Heart right ventricle (tissue), 16 donors: ENCODE measurements at regions of chr2 and their contacts with region 1.

Region 1: GRCh38 chr2:136025057-136025973 is 39.9 kb upstream of the DARS1 start:
- DNase-seq: peak; percentile 78
- ATAC-seq: peak; percentile 95 to 99 (median 98)
- H3K4me3 ChIP-seq: peak overlapping the region in 6 of 10 donors; percentile 12 to 38 (median 27)
- H3K27ac ChIP-seq: peak overlapping the region in 5 of 10 donors; percentile 19 to 66 (median 61)
- H3K4me1 ChIP-seq: peaks cover 0 to 27% (median 13%) of the 10 kb centered on the region in 9 donors
- H3K27me3 ChIP-seq: no peaks in the 10 kb centered on the region
- CTCF ChIP-seq: no peak

Region 2: GRCh38 chr2:135985018-135985825 is 40.1 kb before region 1 on chr2 and contains the start of gene DARS1:
- intact Hi-C with region 1: loop called in 2 of 10 experiments (anchors 5 kb)
- DNase-seq: peak; percentile 94 to 95
- ATAC-seq: peak; percentile 97 to 99 (median 98)
- H3K4me3 ChIP-seq: peak within 1 kb of the TSS; percentile 75 to 98 (median 90)
- H3K27ac ChIP-seq: peak within 1 kb of the TSS; percentile 88 to 100 (median 98)
- H3K4me1 ChIP-seq: peaks cover 0 to 53% (median 37%) of the 10 kb centered on the region in 9 donors
- H3K27me3 ChIP-seq: no peaks in the 10 kb centered on the region
- CTCF ChIP-seq: no peak
- total RNA-seq, gene DARS1: 53.7 to 74.3 (median 65.7) TPM

Region 3: DNA sequence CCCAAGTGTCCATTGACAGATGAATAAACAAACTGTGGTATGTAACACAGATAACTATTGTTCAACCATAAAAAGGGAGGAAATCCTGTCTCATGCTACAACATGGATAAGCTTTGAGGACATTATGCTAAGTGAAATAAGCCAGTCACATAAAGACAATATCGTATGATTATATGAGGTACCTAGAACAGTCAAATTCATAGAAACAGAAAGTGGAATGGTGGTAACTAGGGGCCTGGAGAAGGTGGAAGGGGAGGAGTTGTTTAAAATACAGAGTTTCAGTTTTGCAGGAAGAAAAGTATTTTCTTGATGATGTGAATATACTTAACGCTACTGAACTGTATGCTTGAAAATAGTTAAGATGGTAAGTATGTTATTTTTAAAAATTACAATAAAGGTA is 397.2 kb after region 1 on chr2:
- intact Hi-C with region 1: no loop called
- DNase-seq: no peak
- ATAC-seq: no peak
- H3K4me3 ChIP-seq: no peak overlapping the region
- H3K27ac ChIP-seq: no peak overlapping the region
- H3K4me1 ChIP-seq: peaks cover 0 to 11% (median 7%) of the 10 kb centered on the region in 9 donors
- H3K27me3 ChIP-seq: peaks cover 0 to 43% (median 32%) of the 10 kb centered on the region in 7 donors
- CTCF ChIP-seq: no peak

Region 4: DNA sequence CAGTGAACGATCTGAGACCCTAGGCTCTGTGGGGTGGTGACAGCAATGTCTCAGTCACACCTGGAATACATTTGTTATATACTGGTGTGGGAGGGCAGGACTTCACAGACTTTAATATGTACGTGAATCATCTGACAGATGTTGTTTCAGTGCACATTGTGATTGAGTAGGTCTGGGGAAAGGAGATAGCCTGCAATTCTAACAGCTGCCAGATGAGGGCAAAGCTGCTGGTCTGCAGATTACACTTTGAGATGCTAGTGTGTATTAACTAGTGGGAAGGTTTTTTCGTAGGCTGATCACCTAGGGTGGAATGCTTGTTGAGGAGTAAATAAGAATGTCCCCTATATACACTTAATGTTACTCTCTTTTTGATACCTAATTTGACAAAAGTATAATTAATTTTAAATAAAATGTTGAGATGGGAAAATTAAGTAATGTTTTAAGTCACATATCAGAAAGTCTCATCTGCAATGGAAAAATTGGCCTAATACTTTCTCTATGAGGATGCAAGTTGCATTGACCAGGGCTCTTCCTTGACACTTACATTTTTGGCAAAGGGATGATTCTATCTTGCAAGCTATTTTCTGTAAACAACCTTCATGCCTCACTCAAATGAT is 1442.0 kb after region 1 on chr2:
- intact Hi-C with region 1: no loop called
- DNase-seq: peak in 1 of 2 donors; percentile 26
- ATAC-seq: peak in 2 of 8 donors; percentile 47 to 51
- H3K4me3 ChIP-seq: no peak overlapping the region
- H3K27ac ChIP-seq: no peak overlapping the region
- H3K4me1 ChIP-seq: no peaks in the 10 kb centered on the region
- H3K27me3 ChIP-seq: no peaks in the 10 kb centered on the region
- CTCF ChIP-seq: peak in 8 of 9 donors; percentile 10 to 71 (median 52)